ENCODE measurements at regions of chr10 and their contacts with region 1.

Region 1: DNA sequence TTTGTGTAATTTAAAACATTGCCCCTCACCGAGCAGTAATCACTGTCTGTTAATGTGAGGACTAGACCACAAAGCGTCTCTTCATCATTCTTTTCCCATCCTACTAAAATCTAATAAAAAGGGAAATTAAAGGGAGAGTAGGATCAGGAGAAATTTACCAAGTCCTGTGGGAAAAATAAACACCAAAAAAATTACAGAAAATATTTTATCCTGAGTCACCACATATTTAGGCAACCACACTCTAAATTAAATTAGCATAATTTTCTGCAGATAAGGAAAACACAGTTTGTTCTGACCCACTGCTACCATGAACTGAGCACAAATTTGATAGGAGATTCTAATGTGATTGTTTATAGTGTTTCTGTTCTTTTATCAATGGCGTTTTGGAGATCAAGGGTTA is 49.3 kb downstream of the CCDC6 start:
- DNase-seq: no peak
- CTCF ChIP-seq: no peak

Region 2: DNA sequence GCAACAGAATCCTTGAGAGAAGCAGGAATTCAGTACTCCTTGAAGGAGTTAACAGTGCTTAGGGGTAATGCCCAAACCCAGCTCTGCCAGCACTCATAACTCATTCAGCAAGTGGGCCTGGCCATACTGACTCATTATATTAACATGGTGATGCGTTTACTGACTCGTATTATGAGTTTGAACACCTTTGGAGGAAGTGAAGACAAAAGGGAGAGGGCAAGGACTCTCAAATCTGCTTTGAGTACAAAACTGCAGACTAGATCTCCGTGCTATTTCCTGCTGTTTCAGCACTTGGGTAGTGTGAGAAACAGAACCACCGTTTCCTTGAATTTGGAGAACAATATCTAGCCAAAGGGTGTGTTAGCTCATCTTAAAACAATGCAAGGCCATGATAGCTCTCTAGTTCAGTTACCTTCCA is 178.2 kb before region 1 on chr10:
- CTCF ChIA-PET with region 1: no interaction called
- POLR2A ChIA-PET with region 1: no interaction called
- DNase-seq: peak; percentile 31
- CTCF ChIP-seq: no peak

Region 3: DNA sequence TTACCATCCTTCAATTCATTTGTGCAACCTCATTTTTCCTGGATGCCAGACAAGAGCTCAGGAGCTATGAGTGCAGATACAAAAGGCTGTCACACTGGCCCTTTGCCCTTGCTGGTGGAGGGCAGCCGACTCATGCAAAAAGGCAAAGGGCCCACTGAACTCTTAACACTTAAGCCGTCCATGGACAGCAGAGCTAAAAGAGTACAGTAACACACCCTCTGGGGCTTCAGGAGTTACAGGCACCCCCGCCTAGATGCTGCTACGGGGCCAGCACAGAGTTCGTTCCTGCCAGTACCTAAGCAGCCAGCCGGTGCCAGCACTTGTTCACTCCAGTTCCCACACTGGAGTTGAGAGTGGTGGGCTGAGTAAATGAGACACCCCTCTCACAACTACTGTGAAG is 33.9 kb before region 1 on chr10:
- CTCF ChIA-PET with region 1: no interaction called
- POLR2A ChIA-PET with region 1: no interaction called
- DNase-seq: no peak
- CTCF ChIP-seq: no peak

Region 4: DNA sequence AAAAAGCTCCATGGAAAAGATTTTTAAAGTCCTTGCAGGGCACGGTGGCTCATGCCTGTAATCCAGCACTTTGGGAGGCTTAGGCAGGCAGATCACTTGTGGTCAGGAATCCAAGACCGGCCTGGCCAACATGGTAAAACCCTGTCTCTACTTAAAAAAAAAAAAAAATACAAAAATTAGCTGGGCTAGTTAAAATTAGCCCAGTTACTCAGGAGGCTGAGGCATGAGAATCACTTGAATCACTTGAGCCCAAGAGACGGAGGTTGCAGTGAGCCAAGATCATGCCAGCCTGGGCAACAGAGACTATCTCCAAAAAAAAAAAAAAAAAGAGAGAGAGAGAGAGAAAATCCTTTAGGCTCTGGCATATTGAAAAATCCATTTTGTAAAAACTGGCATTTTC is 12.6 kb before region 1 on chr10:
- CTCF ChIA-PET with region 1: interaction called, 11 read pairs
- POLR2A ChIA-PET with region 1: no interaction called
- DNase-seq: no peak
- CTCF ChIP-seq: no peak

Measured in GM10248 (cell line).